Activated CD4-positive, alpha-beta T cell treated with anti-CD3 and anti-CD28 coated beads, Interleukin-2, amount 10 ng/mL, durations not matched to agents 24 days and 14 days (primary cell): ENCODE measurements at regions of chr4 and their contacts with region 1.

Region 1: DNA sequence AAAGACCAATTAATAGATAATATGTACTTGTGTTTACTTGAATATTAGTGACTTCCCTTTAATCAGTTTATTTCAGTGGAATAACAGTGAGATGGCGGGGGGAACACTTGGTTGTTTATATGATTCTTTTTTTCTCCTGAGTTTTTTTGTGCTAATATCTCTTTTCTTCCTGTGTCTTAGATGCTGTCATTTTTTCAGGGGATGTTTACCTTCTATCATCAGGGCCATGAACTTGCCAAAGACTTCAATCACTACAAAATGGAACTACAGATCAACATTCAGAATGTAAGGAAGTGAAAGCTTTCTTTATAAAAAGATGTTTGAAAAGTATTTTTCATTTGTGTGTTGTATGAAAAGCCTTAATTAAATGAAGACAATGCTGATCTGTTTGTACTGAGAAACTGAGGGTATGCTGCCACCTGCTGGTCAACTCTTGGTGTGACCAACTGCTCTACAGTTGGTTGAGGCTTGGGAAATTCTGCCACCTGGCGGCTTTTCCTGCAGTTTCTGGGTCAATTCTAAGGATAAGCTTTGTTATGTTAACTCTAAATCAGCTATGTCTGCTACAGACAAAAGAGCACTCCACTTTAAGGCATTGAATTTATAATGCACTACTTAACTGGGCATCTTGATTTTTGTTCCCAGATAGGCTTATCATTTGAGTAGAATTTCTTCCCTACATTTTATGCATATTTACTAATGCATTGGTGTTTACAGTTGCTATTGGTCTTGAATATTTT is 134.8 kb downstream of the ARHGAP10 start:
- DNase-seq: peak; percentile 96
- H3K4me3 Mint-ChIP-seq: no peak overlapping the region
- H3K27ac Mint-ChIP-seq: no peak overlapping the region
- H3K4me1 Mint-ChIP-seq: peaks cover 5% of the 10 kb centered on the region
- H3K27me3 Mint-ChIP-seq: no peaks in the 10 kb centered on the region

Region 2: DNA sequence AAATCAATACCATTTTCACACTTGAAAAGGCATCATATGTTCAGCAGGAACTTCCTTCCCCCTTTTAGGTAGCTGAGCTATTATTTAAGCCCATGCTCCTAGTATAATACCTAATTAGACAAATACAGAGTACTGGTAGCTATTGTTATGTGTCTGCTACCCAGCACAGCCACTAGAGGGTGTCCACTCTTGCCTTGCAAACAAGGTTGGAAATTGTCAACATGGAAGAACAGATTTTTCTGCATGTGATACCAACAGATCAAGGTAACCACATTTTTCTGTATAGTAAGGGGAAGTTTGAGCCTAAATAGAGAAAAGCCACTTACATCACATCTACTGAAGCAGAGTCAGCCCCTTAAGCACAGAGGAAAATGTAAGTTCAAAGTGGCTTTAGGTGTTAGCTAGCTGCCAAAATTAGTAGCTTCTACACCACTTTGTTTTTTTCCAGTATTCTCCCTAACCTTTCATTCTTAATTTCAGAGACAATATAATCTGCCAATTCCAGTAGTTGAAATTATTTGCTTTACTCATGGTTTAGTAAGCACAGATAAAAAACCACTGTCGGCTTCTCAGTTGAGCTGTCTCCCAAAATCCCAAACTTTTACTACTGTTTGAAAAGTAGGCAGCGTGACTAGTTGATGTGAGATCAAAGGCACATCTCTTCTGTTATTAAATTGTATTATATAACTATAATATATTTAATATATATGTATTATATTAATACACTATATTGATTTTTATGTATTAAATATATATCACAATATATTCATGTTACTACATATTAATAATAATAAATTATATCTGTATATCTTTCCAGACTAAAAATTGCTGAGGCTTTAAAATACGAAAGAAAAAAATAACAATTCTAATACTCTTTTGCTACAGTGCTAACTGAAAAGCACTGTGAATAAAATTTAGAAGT is 347.6 kb before region 1 on chr4:
- intact Hi-C with region 1: loop called (anchors 1 kb)
- DNase-seq: peak; percentile 82
- H3K4me3 Mint-ChIP-seq: no peak overlapping the region
- H3K27ac Mint-ChIP-seq: no peak overlapping the region
- H3K4me1 Mint-ChIP-seq: no peaks in the 10 kb centered on the region
- H3K27me3 Mint-ChIP-seq: peaks cover 8% of the 10 kb centered on the region

Region 3: GRCh38 chr4:147617173-147617840 is 249.4 kb before region 1 on chr4 and contains the start of gene TMEM184C:
- intact Hi-C with region 1: loop called (anchors 5 kb)
- DNase-seq: peak; percentile 100
- H3K4me3 Mint-ChIP-seq: peak within 1 kb of the TSS; percentile 99
- H3K27ac Mint-ChIP-seq: peak within 1 kb of the TSS; percentile 94
- H3K4me1 Mint-ChIP-seq: peaks cover 21% of the 10 kb centered on the region
- H3K27me3 Mint-ChIP-seq: peaks cover 17% of the 10 kb centered on the region
- total RNA-seq, gene TMEM184C: 18.3 and 19.7 TPM in 2 replicates

Region 4: GRCh38 chr4:147731580-147732517 is 134.9 kb before region 1 on chr4 and contains the start of gene ARHGAP10:
- intact Hi-C with region 1: loop called (anchors 10 kb)
- DNase-seq: peak; percentile 88
- H3K4me3 Mint-ChIP-seq: peak within 1 kb of the TSS; percentile 94
- H3K27ac Mint-ChIP-seq: peak within 1 kb of the TSS; percentile 90
- H3K4me1 Mint-ChIP-seq: peaks cover 34% of the 10 kb centered on the region
- H3K27me3 Mint-ChIP-seq: peaks cover 36% of the 10 kb centered on the region
- total RNA-seq, gene ARHGAP10: 7.4 and 8.3 TPM in 2 replicates

Region 5: GRCh38 chr4:147994076-147994475 is 127.4 kb after region 1 on chr4:
- intact Hi-C with region 1: no loop called
- DNase-seq: no peak
- H3K4me3 Mint-ChIP-seq: no peak overlapping the region
- H3K27ac Mint-ChIP-seq: no peak overlapping the region
- H3K4me1 Mint-ChIP-seq: no peaks in the 10 kb centered on the region
- H3K27me3 Mint-ChIP-seq: no peaks in the 10 kb centered on the region